Activated CD4-positive, alpha-beta memory T cell treated with anti-CD3 and anti-CD28 coated beads for 36 hours (primary cell): ENCODE measurements at regions of chr1 and their contacts with region 1.

Region 1: DNA sequence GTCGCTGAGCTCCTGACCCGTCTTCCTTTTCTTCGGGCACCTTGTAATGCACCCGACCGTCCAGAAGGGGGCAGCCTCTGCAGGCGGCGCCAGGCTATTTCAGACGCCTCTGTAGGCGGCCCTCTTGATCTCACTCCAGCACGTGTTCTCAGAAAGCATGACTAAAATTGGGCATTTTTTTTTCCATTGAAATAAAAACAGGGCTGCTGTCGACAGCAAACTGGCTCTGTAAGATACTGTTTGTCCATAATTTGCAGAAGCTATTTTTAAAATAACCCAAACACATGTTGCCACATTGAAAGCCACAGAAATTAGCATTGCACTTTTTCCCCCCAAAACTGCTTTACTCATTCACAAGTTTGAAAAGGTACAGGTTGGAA is 78.0 kb downstream of the STUM start:
- DNase-seq: peak; percentile 92
- H3K4me3 Mint-ChIP-seq: peak overlapping the region; percentile 38
- H3K27ac Mint-ChIP-seq: peak overlapping the region; percentile 76
- H3K4me1 Mint-ChIP-seq: peaks cover 25% of the 10 kb centered on the region
- H3K27me3 Mint-ChIP-seq: peaks cover 1% of the 10 kb centered on the region

Region 2: GRCh38 chr1:226642876-226643576 is 16.5 kb after region 1 on chr1:
- CTCF ChIA-PET with region 1: interaction called, 14 read pairs
- POLR2A ChIA-PET with region 1: no interaction called
- intact Hi-C with region 1: no loop called
- DNase-seq: peak; percentile 86
- H3K4me3 Mint-ChIP-seq: peak overlapping the region; percentile 14
- H3K27ac Mint-ChIP-seq: peak overlapping the region; percentile 76
- H3K4me1 Mint-ChIP-seq: peaks cover 56% of the 10 kb centered on the region
- H3K27me3 Mint-ChIP-seq: no peaks in the 10 kb centered on the region

Region 3: DNA sequence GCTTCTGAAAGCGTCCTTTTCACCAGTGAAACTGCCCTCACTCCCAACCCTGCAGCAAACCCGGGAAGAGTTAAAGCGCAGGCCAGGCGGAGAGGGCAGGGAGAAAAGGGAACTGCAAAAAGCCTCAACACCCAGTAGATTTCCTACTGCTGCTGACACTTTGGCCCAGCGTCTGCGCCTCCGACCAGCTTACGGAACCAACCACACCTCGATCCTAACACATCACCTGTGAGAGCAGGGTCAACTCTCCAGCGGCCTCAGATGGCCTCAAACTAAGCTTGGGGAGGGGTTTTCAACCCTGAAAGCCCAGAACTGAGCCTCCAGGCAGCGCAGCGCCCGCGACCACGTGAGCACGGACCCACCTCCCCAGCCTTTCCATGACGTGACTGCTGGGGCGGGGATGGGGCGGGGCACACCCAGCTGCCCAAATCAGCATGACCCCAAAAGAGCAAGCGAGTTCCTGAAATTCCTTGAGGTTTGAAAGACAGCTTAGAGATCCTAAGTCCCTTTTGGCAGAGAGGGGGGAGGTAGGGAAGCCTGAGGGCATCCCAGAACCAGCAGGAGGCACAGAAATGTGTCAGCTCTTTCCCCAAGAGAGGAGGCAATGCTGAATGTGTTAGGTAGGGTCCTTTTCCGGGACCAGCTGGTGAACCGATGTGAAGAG is 53.4 kb after region 1 on chr1:
- CTCF ChIA-PET with region 1: interaction called, 10 read pairs
- POLR2A ChIA-PET with region 1: no interaction called
- intact Hi-C with region 1: no loop called
- DNase-seq: peak; percentile 89
- H3K4me3 Mint-ChIP-seq: peak overlapping the region; percentile 71
- H3K27ac Mint-ChIP-seq: peak overlapping the region; percentile 93
- H3K4me1 Mint-ChIP-seq: peaks cover 98% of the 10 kb centered on the region
- H3K27me3 Mint-ChIP-seq: no peaks in the 10 kb centered on the region

Region 4: DNA sequence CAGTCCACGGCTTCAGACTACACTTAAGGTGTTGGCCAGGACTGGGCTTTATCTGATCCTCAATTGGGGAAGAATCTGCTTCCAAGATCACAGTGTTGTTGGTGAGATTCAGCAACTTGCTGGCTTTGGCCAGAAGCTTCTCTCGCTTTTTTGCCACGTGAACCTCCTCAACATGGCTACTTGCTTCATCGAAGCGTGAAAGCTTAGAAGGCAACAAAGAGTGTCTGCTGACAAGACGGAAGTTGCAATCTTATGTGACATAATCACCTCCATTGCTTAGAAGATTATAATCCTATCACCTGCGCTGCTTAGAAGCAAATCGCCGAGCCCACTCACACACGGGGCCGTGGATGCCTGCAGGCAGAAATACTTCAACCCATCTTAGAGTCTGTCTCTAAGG is 122.9 kb after region 1 on chr1:
- CTCF ChIA-PET with region 1: no interaction called
- POLR2A ChIA-PET with region 1: no interaction called
- intact Hi-C with region 1: no loop called
- DNase-seq: no peak
- H3K4me3 Mint-ChIP-seq: no peak overlapping the region
- H3K27ac Mint-ChIP-seq: no peak overlapping the region
- H3K4me1 Mint-ChIP-seq: peaks cover 8% of the 10 kb centered on the region
- H3K27me3 Mint-ChIP-seq: no peaks in the 10 kb centered on the region

Region 5: GRCh38 chr1:226882631-226883409 is 256.3 kb after region 1 on chr1:
- CTCF ChIA-PET with region 1: interaction called, 6 read pairs
- POLR2A ChIA-PET with region 1: no interaction called
- intact Hi-C with region 1: loop called (anchors 1 kb)
- DNase-seq: peak; percentile 49
- H3K4me3 Mint-ChIP-seq: peak overlapping the region; percentile 56
- H3K27ac Mint-ChIP-seq: peak overlapping the region; percentile 92
- H3K4me1 Mint-ChIP-seq: peaks cover 49% of the 10 kb centered on the region
- H3K27me3 Mint-ChIP-seq: no peaks in the 10 kb centered on the region

Region 6: DNA sequence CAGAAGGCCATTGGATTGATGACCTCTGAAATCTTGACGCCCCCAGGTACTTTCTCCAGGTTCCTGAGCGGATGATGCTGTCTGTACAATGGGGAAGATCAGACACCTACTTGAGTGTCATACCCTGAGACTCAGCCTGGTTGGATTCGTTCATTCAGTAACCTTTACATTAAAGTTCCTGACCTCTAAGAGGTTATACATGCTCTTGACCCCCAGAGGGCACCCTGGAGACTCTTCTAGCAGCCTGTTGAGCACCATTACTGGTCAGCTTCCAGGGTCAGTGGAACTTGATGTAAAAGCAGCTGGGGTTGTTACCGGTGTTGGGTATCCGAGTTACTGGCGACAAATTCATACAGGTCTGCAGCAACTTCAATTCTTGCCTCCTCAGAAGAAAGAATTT is 822.5 kb after region 1 on chr1:
- CTCF ChIA-PET with region 1: interaction called, 5 read pairs
- POLR2A ChIA-PET with region 1: no interaction called
- intact Hi-C with region 1: loop called (anchors 10 kb)
- DNase-seq: peak; percentile 41
- H3K4me3 Mint-ChIP-seq: no peak overlapping the region
- H3K27ac Mint-ChIP-seq: no peak overlapping the region
- H3K4me1 Mint-ChIP-seq: no peaks in the 10 kb centered on the region
- H3K27me3 Mint-ChIP-seq: peaks cover 26% of the 10 kb centered on the region